ENCODE measurements at regions of chr17 and their contacts with region 1.

Region 1: GRCh38 chr17:48344246-48344645 is 85.8 kb downstream of the SKAP1 start:
- DNase-seq: no peak
- ATAC-seq: no peak
- H3K4me3 ChIP-seq: no peak overlapping the region
- H3K27ac ChIP-seq: no peak overlapping the region
- H3K4me1 ChIP-seq: no peaks in the 10 kb centered on the region
- H3K27me3 ChIP-seq: no peaks in the 10 kb centered on the region
- CTCF ChIP-seq: no peak
- EP300 ChIP-seq: no peak
- POLR2A ChIP-seq: no peak
- RAD21 ChIP-seq: no peak

Region 2: DNA sequence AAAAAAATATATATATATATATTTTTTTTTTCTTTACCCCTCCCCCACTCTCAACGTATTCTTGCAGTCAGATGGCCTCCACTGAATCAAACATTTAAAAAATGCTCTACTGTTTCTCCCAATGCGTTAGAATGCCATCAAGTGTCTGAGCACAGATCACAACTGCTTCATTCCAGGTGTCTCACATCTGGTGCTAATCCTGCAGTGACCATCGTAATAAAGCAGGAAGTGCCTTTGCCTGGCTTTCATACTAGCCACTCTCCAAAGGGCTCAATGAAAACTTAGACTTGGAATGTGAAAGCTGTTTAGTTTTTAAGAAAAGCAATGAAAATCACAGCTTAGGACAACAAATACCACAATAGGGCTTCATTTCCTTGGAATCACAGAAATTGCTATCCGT is 48.6 kb after region 1 on chr17:
- CTCF ChIA-PET with region 1: no interaction called
- POLR2A ChIA-PET with region 1: no interaction called
- RAD21 ChIA-PET with region 1: no interaction called
- SMC1A ChIA-PET with region 1: no interaction called
- in situ Hi-C with region 1: no loop called
- intact Hi-C with region 1: no loop called
- DNase-seq: no peak
- ATAC-seq: no peak
- H3K4me3 ChIP-seq: no peak overlapping the region
- H3K27ac ChIP-seq: no peak overlapping the region
- H3K4me1 ChIP-seq: peaks cover 3% of the 10 kb centered on the region; the same call in 1 of the 2 replicates
- H3K27me3 ChIP-seq: no peaks in the 10 kb centered on the region
- CTCF ChIP-seq: no peak
- EP300 ChIP-seq: no peak
- POLR2A ChIP-seq: no peak
- RAD21 ChIP-seq: no peak

Region 3: DNA sequence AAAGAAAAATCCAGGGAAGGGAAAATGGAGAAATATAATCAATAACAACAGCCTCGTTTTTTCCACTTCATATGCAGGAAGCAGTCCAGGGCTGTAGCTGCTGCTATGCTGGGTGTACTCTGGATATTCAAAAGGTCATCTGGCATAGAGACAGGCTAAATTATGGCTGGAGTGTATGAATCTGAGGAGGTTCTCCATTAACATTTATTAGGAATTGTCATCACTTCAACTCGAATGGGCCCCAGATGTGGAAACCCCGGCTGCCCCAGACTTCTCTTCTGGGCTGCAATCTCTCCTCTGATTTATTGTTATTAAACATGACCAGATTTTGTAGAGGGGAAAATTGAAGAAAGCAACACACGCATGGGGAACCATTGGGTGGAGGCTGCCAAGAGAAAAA is 119.3 kb after region 1 on chr17:
- CTCF ChIA-PET with region 1: interaction called, 5 read pairs
- POLR2A ChIA-PET with region 1: no interaction called
- RAD21 ChIA-PET with region 1: no interaction called
- SMC1A ChIA-PET with region 1: interaction called, 3 read pairs
- in situ Hi-C with region 1: loop called (anchors 5 kb)
- intact Hi-C with region 1: loop called (anchors 5 kb)
- DNase-seq: no peak
- ATAC-seq: no peak
- H3K4me3 ChIP-seq: no peak overlapping the region
- H3K27ac ChIP-seq: no peak overlapping the region
- H3K4me1 ChIP-seq: peaks cover 12% of the 10 kb centered on the region
- H3K27me3 ChIP-seq: no peaks in the 10 kb centered on the region
- CTCF ChIP-seq: no peak
- EP300 ChIP-seq: no peak
- POLR2A ChIP-seq: no peak
- RAD21 ChIP-seq: no peak